Aorta (tissue), 5 donors: ENCODE measurements at regions of chr3 and their contacts with region 1.

Region 1: GRCh38 chr3:19543212-19543841 is 390.7 kb downstream of the EFHB start:
- DNase-seq: no peak
- ATAC-seq: no peak
- H3K4me3 ChIP-seq: no peak overlapping the region
- H3K27ac ChIP-seq: no peak overlapping the region
- H3K4me1 ChIP-seq: peaks cover 3 to 10% of the 10 kb centered on the region in 2 donors
- H3K27me3 ChIP-seq: no peaks in the 10 kb centered on the region

Region 2: GRCh38 chr3:19348929-19349564 is 194.3 kb before region 1 on chr3:
- intact Hi-C with region 1: loop called (anchors 2 to 5 kb)
- DNase-seq: no peak
- ATAC-seq: peak; percentile 63
- H3K4me3 ChIP-seq: no peak overlapping the region
- H3K27ac ChIP-seq: no peak overlapping the region
- H3K4me1 ChIP-seq: peaks cover 0 to 2% of the 10 kb centered on the region in 2 donors
- H3K27me3 ChIP-seq: no peaks in the 10 kb centered on the region

Region 3: DNA sequence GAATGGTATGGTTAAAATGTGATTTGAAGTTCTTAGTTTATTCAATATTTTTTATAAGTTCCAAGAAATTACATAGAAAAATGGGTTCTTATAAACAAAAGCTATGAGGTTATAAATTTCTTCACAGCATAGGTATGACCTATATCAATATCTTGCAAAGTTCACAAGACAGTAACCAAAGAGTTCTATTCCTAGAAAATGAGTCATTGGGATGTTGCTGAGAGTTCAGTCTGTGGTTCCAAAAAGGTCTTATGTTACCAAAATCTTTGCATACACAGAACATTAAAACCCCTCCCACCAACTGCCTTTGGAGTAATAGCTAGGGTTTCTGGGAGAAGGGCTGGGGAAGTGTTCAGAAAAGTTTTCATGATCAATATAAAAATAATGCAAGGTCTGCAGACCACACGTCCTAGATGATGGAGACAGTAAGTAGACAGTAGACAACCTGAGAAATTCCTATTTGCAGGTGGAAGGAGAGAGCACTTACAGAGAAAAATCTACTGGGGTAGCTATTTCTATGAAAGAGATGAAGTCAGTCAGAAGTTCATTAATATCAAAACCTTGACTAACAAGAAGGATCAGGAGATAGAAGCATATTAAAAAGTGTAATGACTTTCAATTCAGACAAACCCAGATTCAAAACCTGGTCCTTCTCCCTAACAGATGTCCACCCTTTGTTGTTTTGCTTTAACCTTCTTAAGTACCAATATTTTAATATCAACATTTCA is 115.7 kb before region 1 on chr3:
- intact Hi-C with region 1: loop called in 1 of 2 experiments (anchors 10 kb)
- DNase-seq: no peak
- ATAC-seq: no peak
- H3K4me3 ChIP-seq: no peak overlapping the region
- H3K27ac ChIP-seq: no peak overlapping the region
- H3K4me1 ChIP-seq: peaks cover 0 to 4% of the 10 kb centered on the region in 2 donors
- H3K27me3 ChIP-seq: no peaks in the 10 kb centered on the region

Region 4: GRCh38 chr3:19506171-19506570 is 37.2 kb before region 1 on chr3:
- intact Hi-C with region 1: no loop called
- DNase-seq: no peak
- ATAC-seq: no peak
- H3K4me3 ChIP-seq: no peak overlapping the region
- H3K27ac ChIP-seq: no peak overlapping the region
- H3K4me1 ChIP-seq: no peaks in the 10 kb centered on the region
- H3K27me3 ChIP-seq: no peaks in the 10 kb centered on the region

Region 5: GRCh38 chr3:19866751-19867347 is 323.5 kb after region 1 on chr3:
- intact Hi-C with region 1: loop called in 1 of 2 experiments (anchors 10 kb)
- DNase-seq: no peak
- ATAC-seq: peak; percentile 83
- H3K4me3 ChIP-seq: no peak overlapping the region
- H3K27ac ChIP-seq: no peak overlapping the region
- H3K4me1 ChIP-seq: no peaks in the 10 kb centered on the region
- H3K27me3 ChIP-seq: no peaks in the 10 kb centered on the region